ENCODE measurements at regions of chr10 and their contacts with region 1.

Region 1: GRCh38 chr10:103192451-103193106 is 493 bp downstream of the NT5C2 start:
- DNase-seq: peak; percentile 95
- ATAC-seq: peak; percentile 58

Region 2: DNA sequence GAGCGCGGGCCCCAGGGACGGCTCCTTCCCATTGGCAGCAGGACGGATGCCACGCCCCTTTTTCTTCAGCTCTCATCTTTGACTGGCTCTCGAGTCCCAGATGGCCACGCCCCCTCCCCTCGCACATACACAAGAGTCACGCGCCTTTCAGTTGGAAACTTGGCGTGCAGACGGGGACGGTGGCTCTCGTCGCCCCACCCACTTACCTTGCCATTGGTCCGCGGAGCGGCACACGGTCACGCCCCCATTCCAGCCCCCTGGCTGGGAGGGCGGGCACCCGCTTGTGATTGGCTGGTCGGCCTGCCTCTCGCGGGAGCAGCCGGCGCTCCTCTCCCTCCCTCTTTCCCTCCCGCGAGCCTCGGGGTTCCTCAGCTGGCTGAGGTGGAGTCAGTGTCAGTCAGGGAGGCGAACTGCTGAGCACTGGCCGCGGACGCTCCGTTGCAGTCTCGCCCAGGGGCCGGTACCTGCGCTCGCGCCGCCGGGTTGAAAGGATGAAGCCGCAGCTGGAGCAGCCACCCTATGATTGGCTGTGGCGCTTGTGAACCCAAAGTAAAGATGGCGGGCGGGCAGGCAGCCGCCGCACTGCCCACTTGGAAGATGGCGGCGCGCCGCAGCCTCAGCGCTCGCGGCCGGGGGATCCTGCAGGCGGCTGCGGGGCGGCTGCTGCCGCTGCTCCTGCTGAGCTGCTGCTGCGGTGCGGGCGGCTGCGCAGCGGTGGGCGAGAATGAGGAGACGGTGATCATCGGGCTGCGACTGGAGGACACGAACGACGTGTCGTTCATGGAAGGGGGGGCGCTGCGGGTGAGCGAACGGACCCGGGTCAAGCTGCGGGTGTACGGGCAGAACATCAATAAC is 274.4 kb before region 1 on chr10 and contains the start of gene CNNM2:
- intact Hi-C with region 1: loop called (anchors 1 kb)
- DNase-seq: peak; percentile 100
- ATAC-seq: peak; percentile 98
- total RNA-seq, gene CNNM2: 3.0 TPM

Region 3: DNA sequence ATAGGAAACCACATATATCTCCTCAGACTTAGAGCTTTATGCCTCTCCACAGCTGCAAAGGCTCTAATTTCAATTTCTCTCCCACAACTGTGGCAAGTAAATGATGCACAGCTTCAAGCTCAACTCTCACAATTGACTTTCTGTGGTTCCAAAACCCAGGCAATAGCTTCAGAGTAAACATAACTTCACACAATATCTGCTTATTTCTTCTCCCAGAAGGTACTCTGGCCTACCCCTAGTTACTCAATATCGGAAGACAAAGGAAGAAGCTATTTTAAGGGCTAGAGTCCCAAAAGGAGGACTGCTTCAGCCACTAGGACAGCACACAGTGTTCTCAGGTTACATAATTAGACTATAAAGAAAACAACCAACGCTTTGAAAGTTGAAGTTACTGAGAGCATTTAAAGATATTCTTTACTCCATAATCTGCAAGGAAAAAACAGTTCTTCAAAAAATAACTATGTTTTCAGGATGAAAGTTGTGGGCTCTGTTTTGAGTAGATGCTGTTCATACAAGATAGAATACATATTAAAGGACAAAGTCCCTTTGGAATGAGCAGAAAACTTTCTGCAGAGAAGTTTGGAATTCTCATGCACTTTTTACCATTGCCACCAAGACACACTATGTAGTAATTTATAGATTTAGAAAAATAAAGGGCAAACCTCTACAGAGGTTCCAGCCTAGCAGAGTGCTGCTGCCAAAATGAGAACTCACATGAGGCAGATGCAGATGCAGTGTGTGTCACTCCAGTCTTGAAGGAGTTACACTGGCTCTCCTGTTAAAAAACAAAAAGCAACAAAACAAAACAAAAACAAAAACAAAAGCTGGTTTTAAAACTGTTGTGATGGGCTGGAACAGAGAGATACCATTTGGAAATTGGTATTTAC is 81.3 kb before region 1 on chr10:
- intact Hi-C with region 1: loop called (anchors 5 kb)
- DNase-seq: no peak
- ATAC-seq: peak; percentile 94

Region 4: GRCh38 chr10:103145860-103146466 is 46.6 kb before region 1 on chr10:
- intact Hi-C with region 1: loop called (anchors 5 kb)
- DNase-seq: no peak
- ATAC-seq: peak; percentile 82

Region 5: GRCh38 chr10:103231047-103231551 is 38.5 kb after region 1 on chr10:
- intact Hi-C with region 1: loop called (anchors 2 kb)
- DNase-seq: no peak
- ATAC-seq: peak; percentile 58

Region 6: DNA sequence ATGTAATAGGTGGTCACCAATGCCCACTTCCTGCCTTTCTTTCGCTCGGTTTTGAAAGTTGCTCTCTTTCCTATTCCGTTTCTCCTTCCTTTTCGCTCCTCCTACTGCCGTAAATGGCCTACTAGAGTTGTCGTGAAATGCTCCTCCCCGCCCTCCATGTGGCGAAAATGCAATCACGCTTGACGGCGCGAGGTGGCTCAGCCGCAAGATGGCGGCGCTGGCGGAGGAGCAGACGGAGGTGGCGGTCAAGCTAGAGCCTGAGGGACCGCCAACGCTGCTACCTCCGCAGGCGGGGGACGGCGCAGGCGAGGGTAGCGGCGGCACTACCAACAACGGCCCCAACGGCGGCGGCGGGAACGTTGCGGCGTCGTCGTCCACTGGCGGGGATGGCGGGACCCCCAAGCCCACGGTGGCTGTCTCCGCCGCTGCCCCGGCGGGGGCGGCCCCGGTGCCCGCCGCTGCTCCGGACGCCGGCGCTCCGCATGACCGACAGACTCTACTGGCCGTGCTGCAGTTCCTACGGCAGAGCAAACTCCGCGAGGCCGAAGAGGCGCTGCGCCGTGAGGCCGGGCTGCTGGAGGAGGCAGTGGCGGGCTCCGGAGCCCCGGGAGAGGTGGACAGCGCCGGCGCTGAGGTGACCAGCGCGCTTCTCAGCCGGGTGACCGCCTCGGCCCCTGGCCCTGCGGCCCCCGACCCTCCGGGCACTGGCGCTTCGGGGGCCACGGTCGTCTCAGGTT is 175.4 kb after region 1 on chr10 and contains the start of gene TAF5:
- intact Hi-C with region 1: loop called (anchors 10 kb)
- DNase-seq: peak; percentile 95
- ATAC-seq: peak; percentile 90
- total RNA-seq, gene TAF5: 3.1 TPM

Region 7: GRCh38 chr10:103416436-103417147 is 224.0 kb after region 1 on chr10:
- intact Hi-C with region 1: no loop called
- DNase-seq: no peak
- ATAC-seq: peak; percentile 58

Measured in Right ventricle myocardium inferior (tissue), 1 donor.